ENCODE measurements at regions of chr3 and their contacts with region 1.

Region 1: GRCh38 chr3:158570999-158571974 is at the start of gene MLF1:
- DNase-seq: peak; percentile 81
- ATAC-seq: peak; percentile 99
- H3K4me3 ChIP-seq: peak within 1 kb of the TSS; percentile 84 to 99
- H3K27ac ChIP-seq: peak within 1 kb of the TSS; percentile 83
- H3K4me1 ChIP-seq: peaks cover 9% of the 10 kb centered on the region
- H3K27me3 ChIP-seq: no peaks in the 10 kb centered on the region; the same call in 1 of the 2 replicates
- CTCF ChIP-seq: no peak
- total RNA-seq, gene MLF1: 51.4 TPM

Region 2: DNA sequence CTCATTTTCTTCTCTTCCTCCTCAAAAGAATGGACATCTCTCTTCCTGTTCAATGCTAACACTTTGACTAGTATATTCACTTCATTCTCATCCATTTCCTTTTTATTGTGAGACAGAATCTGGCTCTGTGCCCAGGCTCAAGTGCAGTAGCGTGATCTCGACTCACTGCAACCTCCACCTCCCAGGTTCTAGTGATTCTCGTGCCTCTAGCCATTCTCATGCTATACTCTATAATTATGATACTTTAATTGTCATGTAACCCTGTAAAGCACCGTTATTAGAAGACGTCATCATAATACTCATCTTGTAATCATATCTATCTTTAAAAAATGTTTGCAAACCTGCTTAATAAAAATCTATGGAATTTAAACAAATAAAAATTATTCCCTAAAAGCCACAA is 572.0 kb before region 1 on chr3:
- CTCF ChIA-PET with region 1: no interaction called
- POLR2A ChIA-PET with region 1: interaction called, 14 read pairs
- in situ Hi-C with region 1: no loop called
- intact Hi-C with region 1: no loop called
- DNase-seq: no peak
- ATAC-seq: no peak
- H3K4me3 ChIP-seq: no peak overlapping the region
- H3K27ac ChIP-seq: no peak overlapping the region
- H3K4me1 ChIP-seq: no peaks in the 10 kb centered on the region
- H3K27me3 ChIP-seq: no peaks in the 10 kb centered on the region
- CTCF ChIP-seq: no peak

Region 3: GRCh38 chr3:158644345-158644908 is 73.1 kb after region 1 on chr3 and contains the start of gene GFM1:
- CTCF ChIA-PET with region 1: no interaction called
- POLR2A ChIA-PET with region 1: interaction called, 4 read pairs
- in situ Hi-C with region 1: no loop called
- intact Hi-C with region 1: loop called (anchors 10 kb)
- DNase-seq: peak; percentile 82
- ATAC-seq: peak; percentile 97
- H3K4me3 ChIP-seq: peak within 1 kb of the TSS; percentile 65 to 89
- H3K27ac ChIP-seq: peak within 1 kb of the TSS; percentile 92
- H3K4me1 ChIP-seq: peaks cover 26% of the 10 kb centered on the region
- H3K27me3 ChIP-seq: no peaks in the 10 kb centered on the region
- CTCF ChIP-seq: peak; percentile 99
- total RNA-seq, gene GFM1: 59.3 TPM

Measured in Panc1 (cell line).